PC-9 (cell line): ENCODE measurements at regions of chr7 and their contacts with region 1.

Region 1: GRCh38 chr7:5532520-5533335 is 109.1 kb upstream of the TNRC18 start:
- DNase-seq: peak; percentile 65 to 85
- H3K4me3 ChIP-seq: no peak overlapping the region
- H3K27ac ChIP-seq: no peak overlapping the region
- H3K4me1 ChIP-seq: peaks cover 32% of the 10 kb centered on the region
- H3K27me3 ChIP-seq: no peaks in the 10 kb centered on the region
- CTCF ChIP-seq: no peak

Region 2: DNA sequence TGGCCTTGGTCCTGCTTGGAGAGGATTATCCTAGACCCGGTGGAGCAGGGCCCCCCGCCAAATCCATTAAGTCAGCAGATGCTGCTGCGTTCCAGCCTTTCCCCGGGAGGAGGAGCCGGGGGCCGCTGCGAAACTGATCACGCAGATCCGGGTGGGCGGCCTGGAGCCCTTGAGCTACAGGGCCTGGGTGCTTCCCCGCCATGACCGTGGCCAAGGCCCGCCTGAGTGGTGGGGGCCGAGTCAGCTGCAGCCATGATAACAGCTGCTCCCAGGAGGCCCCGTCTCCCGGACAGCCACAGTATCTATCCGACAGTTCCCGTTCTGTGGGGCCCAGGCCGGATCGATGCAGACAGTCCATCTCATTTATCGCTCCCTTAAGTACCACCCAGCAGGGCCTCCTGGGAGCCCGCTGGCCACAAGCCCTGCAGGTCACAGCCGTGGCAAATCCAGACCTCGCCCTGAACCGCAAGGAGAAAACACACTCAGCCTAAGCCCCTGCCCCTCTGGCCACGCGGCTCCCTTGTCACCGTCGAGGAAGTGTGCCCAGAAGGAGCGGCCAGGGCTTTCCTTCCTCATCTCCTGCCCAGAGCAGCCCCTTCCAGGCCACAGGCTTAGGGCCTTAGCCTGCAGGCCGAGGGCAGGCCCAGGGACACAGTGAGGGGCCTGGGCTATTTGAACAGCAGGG is 284.4 kb before region 1 on chr7:
- CTCF ChIA-PET with region 1: no interaction called
- POLR2A ChIA-PET with region 1: no interaction called
- intact Hi-C with region 1: no loop called
- DNase-seq: no peak
- H3K4me3 ChIP-seq: no peak overlapping the region
- H3K27ac ChIP-seq: no peak overlapping the region
- H3K4me1 ChIP-seq: peaks cover 9% of the 10 kb centered on the region
- H3K27me3 ChIP-seq: peaks cover 6% of the 10 kb centered on the region; the same call in 1 of the 2 replicates
- CTCF ChIP-seq: no peak

Region 3: GRCh38 chr7:5546626-5547025 is 13.9 kb after region 1 on chr7:
- CTCF ChIA-PET with region 1: interaction called, 3 read pairs
- POLR2A ChIA-PET with region 1: interaction called, 11 read pairs
- intact Hi-C with region 1: no loop called
- DNase-seq: peak in 1 of 2 experiments; percentile 35
- H3K4me3 ChIP-seq: no peak overlapping the region
- H3K27ac ChIP-seq: no peak overlapping the region
- H3K4me1 ChIP-seq: peaks cover 5% of the 10 kb centered on the region
- H3K27me3 ChIP-seq: no peaks in the 10 kb centered on the region
- CTCF ChIP-seq: no peak